ENCODE measurements at regions of chr10 and their contacts with region 1.

Region 1: DNA sequence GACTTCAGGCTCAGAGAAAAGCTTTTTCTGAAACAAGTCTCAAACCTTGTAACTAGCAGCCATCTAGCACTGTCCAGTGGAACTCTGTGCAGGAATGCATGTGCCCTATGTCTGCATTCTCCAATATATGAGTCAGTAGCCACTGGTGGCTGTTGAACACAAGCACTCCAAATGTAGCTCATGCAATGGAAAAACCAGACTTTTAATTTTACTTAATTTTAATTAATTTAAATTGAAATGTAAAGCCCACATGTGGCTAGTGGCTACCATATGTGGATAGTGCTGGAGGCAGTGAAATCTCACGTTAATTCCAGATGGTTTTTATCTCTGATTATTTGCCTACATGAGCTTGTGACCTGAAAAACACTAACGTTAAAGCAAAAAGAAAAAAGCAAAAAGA is 225.1 kb downstream of the GATA3 start:
- DNase-seq: peak; percentile 63
- H3K4me3 ChIP-seq: no peak overlapping the region
- H3K27ac ChIP-seq: no peak overlapping the region
- H3K4me1 ChIP-seq: peaks cover 9% of the 10 kb centered on the region
- H3K27me3 ChIP-seq: no peaks in the 10 kb centered on the region
- CTCF ChIP-seq: no peak

Region 2: DNA sequence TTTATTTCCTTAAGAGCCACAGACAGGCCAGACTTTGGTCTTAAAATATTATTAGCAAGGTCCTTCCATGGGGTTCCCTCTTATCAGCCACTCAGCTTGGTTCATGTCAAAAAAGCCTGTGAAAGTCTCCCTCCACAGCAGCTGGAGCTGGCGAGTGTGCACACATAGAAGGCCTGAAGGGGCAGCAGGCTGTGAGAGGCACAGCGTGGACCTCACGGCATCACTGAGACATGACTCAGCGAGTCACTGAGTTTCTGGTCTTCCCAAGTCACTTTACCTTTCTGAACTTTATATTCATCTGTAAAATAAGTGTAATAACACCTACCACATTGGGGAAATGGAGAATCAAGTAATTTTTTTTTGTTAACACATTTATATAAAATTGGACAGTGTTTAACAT is 452.6 kb before region 1 on chr10:
- CTCF ChIA-PET with region 1: no interaction called
- dilution Hi-C with region 1: no loop called
- in situ Hi-C with region 1: no loop called
- intact Hi-C with region 1: no loop called
- DNase-seq: peak; percentile 40
- H3K4me3 ChIP-seq: no peak overlapping the region
- H3K27ac ChIP-seq: no peak overlapping the region
- H3K4me1 ChIP-seq: no peaks in the 10 kb centered on the region
- H3K27me3 ChIP-seq: no peaks in the 10 kb centered on the region
- CTCF ChIP-seq: peak in 1 of 2 donors; percentile 26

Region 3: GRCh38 chr10:8379906-8380832 is 100.6 kb after region 1 on chr10:
- CTCF ChIA-PET with region 1: no interaction called
- dilution Hi-C with region 1: no loop called
- in situ Hi-C with region 1: no loop called
- intact Hi-C with region 1: no loop called
- DNase-seq: no peak
- H3K4me3 ChIP-seq: no peak overlapping the region
- H3K27ac ChIP-seq: no peak overlapping the region
- H3K4me1 ChIP-seq: no peaks in the 10 kb centered on the region
- H3K27me3 ChIP-seq: no peaks in the 10 kb centered on the region
- CTCF ChIP-seq: no peak

Region 4: GRCh38 chr10:8473205-8473604 is 193.6 kb after region 1 on chr10:
- CTCF ChIA-PET with region 1: no interaction called
- dilution Hi-C with region 1: no loop called
- in situ Hi-C with region 1: no loop called
- intact Hi-C with region 1: loop called (anchors 10 kb)
- DNase-seq: no peak
- H3K4me3 ChIP-seq: no peak overlapping the region
- H3K27ac ChIP-seq: no peak overlapping the region
- H3K4me1 ChIP-seq: no peaks in the 10 kb centered on the region
- H3K27me3 ChIP-seq: no peaks in the 10 kb centered on the region
- CTCF ChIP-seq: peak in 1 of 2 donors; percentile 19

Measured in mammary epithelial cell (primary cell).